CD8-positive, alpha-beta T cell (primary cell): ENCODE measurements at regions of chr1 and their contacts with region 1.

Region 1: GRCh38 chr1:32247983-32248889 is 1.2 kb downstream of the FAM167B start:
- DNase-seq: peak; percentile 51 to 84 (median 76)
- ATAC-seq: peak; percentile 5
- H3K4me3 ChIP-seq: peak overlapping the region; percentile 21 to 28
- H3K4me3 Mint-ChIP-seq: peak overlapping the region; percentile 66
- H3K27ac ChIP-seq: peak overlapping the region; percentile 40 to 93
- H3K27ac Mint-ChIP-seq: peak overlapping the region; percentile 99
- H3K4me1 ChIP-seq: peaks cover 42% of the 10 kb centered on the region
- H3K4me1 Mint-ChIP-seq: peaks cover 44% of the 10 kb centered on the region
- H3K27me3 ChIP-seq: no peaks in the 10 kb centered on the region
- H3K27me3 Mint-ChIP-seq: no peaks in the 10 kb centered on the region
- CTCF ChIP-seq: peak; percentile 86

Region 2: DNA sequence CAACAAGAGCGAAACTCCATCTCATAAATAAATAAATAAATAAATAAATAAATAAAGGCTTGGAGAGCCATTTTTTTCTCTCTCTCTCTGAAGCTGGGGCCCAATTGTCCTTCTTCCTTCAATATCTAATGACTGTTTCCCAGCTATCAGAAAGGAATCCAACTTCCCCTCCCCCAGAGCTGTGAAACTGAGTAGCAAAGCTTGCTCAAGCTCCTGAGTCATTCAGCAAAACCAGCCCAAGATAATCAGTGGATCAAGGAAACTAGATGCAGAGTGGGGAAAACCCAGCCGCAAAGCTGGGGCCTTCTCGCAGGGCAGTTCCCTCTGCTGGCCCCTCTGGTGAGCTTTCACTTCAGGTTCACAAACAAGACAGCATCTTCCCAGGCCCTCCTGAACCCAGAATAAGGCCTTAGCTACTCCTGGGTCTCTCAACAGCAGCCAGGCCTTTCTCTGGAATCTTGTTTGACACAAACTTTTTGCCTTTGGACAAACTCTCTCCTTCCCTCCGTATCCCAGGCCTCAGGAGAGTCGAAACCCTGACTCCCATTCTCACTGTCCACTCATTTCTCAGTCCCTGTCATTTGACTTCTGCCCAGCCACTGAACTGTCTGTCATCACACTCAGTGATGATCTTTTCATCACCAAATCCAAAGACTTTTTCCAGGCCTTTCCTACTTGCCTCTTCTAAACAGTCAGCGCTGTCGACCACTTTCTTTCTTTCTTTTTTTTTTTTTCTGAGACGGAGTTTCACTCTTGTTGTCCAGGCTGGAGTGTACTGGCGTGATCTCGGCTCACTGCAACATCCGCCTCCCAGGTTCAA is 292.1 kb before region 1 on chr1:
- CTCF ChIA-PET with region 1: no interaction called
- POLR2A ChIA-PET with region 1: no interaction called
- intact Hi-C with region 1: no loop called
- DNase-seq: peak; percentile 42 to 93 (median 72)
- ATAC-seq: peak; percentile 80
- H3K4me3 ChIP-seq: no peak overlapping the region
- H3K4me3 Mint-ChIP-seq: peak overlapping the region; percentile 42
- H3K27ac ChIP-seq: peak overlapping the region in 1 of 2 experiments; percentile 58
- H3K27ac Mint-ChIP-seq: peak overlapping the region; percentile 58
- H3K4me1 ChIP-seq: peaks cover 22% of the 10 kb centered on the region
- H3K4me1 Mint-ChIP-seq: peaks cover 43% of the 10 kb centered on the region
- H3K27me3 ChIP-seq: no peaks in the 10 kb centered on the region
- H3K27me3 Mint-ChIP-seq: no peaks in the 10 kb centered on the region
- CTCF ChIP-seq: no peak

Region 3: DNA sequence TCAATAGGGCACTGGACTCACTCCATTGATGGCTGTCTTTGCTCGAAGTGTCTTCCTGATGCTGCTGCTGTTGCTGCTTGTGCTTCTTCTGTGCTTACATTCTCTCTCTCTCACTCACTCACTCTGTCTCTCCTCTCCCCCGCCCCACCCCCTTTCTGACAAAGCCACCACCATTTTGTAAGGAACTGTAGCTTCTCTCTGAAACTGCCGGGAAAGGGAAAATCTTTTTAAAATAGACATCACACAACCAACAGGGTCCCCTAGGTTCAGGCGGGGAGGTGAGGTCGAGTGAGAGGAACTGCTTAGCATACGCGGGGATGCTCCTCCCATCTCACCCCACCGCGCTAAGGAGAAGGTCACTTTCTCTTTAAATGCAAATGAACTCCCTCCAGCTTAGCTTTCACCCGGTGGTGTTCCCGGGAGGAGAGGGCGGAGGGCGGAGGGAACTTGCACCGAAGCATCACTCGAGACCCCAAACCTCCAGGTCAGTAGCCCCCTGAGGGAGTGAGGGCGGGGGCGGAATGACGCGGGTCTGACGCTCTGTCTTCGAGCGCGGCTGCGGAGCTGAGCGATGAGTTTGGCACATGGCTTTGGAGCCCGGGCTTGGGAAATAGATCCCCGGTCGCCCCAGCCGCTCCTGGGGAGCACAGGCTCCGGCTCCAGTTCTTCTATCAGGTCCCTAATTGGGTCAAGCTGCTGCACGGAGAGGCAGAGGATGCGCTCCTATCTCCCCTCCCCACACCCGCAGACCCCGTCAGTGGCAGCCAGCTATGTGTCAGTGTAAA is 47.8 kb before region 1 on chr1 and contains the start of gene CCDC28B:
- CTCF ChIA-PET with region 1: interaction called, 3 read pairs
- POLR2A ChIA-PET with region 1: interaction called, 6 read pairs
- intact Hi-C with region 1: loop called in 1 of 2 experiments (anchors 2 kb)
- DNase-seq: peak in 8 of 9 experiments; percentile 32 to 81 (median 64)
- ATAC-seq: peak; percentile 49
- H3K4me3 ChIP-seq: peak within 1 kb of the TSS; percentile 69 to 70
- H3K4me3 Mint-ChIP-seq: peak within 1 kb of the TSS; percentile 85
- H3K27ac ChIP-seq: peak within 1 kb of the TSS; percentile 75 to 78
- H3K27ac Mint-ChIP-seq: peak within 1 kb of the TSS; percentile 97
- H3K4me1 ChIP-seq: peaks cover 46% of the 10 kb centered on the region
- H3K4me1 Mint-ChIP-seq: peaks cover 59% of the 10 kb centered on the region
- H3K27me3 ChIP-seq: no peaks in the 10 kb centered on the region
- H3K27me3 Mint-ChIP-seq: no peaks in the 10 kb centered on the region
- CTCF ChIP-seq: no peak
- total RNA-seq, gene CCDC28B: 3.8 to 5.2 TPM

Region 4: DNA sequence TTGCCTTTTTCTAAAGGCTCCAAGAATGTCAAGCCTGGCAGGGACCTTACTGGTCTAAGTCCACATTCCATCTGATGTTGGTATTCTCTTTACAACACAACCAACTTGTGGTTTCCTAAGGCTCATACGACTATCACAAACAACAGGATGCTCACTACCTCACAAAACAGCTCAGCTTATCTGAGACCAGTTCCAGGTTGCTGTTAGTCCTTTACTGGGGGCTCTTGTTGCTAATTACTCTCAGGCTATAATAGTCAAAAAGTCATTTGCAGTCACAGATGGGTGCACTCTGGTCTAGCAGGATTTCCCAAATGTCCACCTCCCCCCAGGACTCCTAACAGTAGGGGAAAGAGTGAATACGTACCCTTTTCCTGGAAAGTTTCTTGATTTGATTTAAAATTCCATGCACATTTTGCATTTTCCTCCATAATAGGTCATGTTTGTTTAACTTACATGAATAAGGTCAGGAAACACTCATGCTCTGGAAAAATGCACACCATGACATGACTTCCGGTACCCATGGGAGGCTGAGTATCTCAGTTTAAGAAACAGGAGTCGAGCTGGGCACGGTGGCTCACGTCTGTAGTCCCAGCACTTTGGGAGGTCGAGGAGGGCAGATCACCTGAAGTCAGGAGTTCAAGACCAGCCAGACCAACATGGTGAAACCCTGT is 18.8 kb after region 1 on chr1:
- CTCF ChIA-PET with region 1: interaction called, 74 read pairs
- POLR2A ChIA-PET with region 1: interaction called, 206 read pairs
- intact Hi-C with region 1: loop called in 1 of 2 experiments (anchors 2 kb)
- DNase-seq: peak in 1 of 9 experiments; percentile 60
- ATAC-seq: peak; percentile 18
- H3K4me3 ChIP-seq: peak overlapping the region in 1 of 2 experiments; percentile 20
- H3K4me3 Mint-ChIP-seq: peak overlapping the region; percentile 76
- H3K27ac ChIP-seq: peak overlapping the region; percentile 50 to 54
- H3K27ac Mint-ChIP-seq: peak overlapping the region; percentile 98
- H3K4me1 ChIP-seq: peaks cover 71% of the 10 kb centered on the region
- H3K4me1 Mint-ChIP-seq: peaks cover 61% of the 10 kb centered on the region
- H3K27me3 ChIP-seq: no peaks in the 10 kb centered on the region
- H3K27me3 Mint-ChIP-seq: no peaks in the 10 kb centered on the region
- CTCF ChIP-seq: no peak

Region 5: GRCh38 chr1:32273388-32274208 is 25.4 kb after region 1 on chr1:
- CTCF ChIA-PET with region 1: interaction called, 14 read pairs
- POLR2A ChIA-PET with region 1: interaction called, 206 read pairs
- intact Hi-C with region 1: loop called (anchors 1 kb)
- DNase-seq: peak; percentile 58 to 96 (median 87)
- ATAC-seq: peak; percentile 88
- H3K4me3 ChIP-seq: peak overlapping the region; percentile 23 to 53
- H3K4me3 Mint-ChIP-seq: peak overlapping the region; percentile 83
- H3K27ac ChIP-seq: peak overlapping the region; percentile 36 to 77
- H3K27ac Mint-ChIP-seq: peak overlapping the region; percentile 98
- H3K4me1 ChIP-seq: peaks cover 78% of the 10 kb centered on the region
- H3K4me1 Mint-ChIP-seq: peaks cover 67% of the 10 kb centered on the region
- H3K27me3 ChIP-seq: no peaks in the 10 kb centered on the region
- H3K27me3 Mint-ChIP-seq: no peaks in the 10 kb centered on the region
- CTCF ChIP-seq: no peak

Region 6: GRCh38 chr1:32321712-32322291 is 73.6 kb after region 1 on chr1:
- CTCF ChIA-PET with region 1: interaction called, 18 read pairs
- POLR2A ChIA-PET with region 1: interaction called, 15 read pairs
- intact Hi-C with region 1: no loop called
- DNase-seq: peak in 7 of 9 experiments; percentile 11 to 72 (median 43)
- ATAC-seq: peak; percentile 87
- H3K4me3 ChIP-seq: peak overlapping the region in 1 of 2 experiments; percentile 6
- H3K4me3 Mint-ChIP-seq: peak overlapping the region; percentile 56
- H3K27ac ChIP-seq: peak overlapping the region; percentile 29 to 41
- H3K27ac Mint-ChIP-seq: peak overlapping the region; percentile 81
- H3K4me1 ChIP-seq: peaks cover 38% of the 10 kb centered on the region
- H3K4me1 Mint-ChIP-seq: peaks cover 38% of the 10 kb centered on the region
- H3K27me3 ChIP-seq: no peaks in the 10 kb centered on the region
- H3K27me3 Mint-ChIP-seq: no peaks in the 10 kb centered on the region
- CTCF ChIP-seq: no peak

Region 7: GRCh38 chr1:32351399-32352238 is 103.4 kb after region 1 on chr1:
- CTCF ChIA-PET with region 1: no interaction called
- POLR2A ChIA-PET with region 1: interaction called, 12 read pairs
- intact Hi-C with region 1: no loop called
- DNase-seq: peak; percentile 81 to 97 (median 90)
- ATAC-seq: peak; percentile 95
- H3K4me3 ChIP-seq: peak overlapping the region; percentile 57 to 85
- H3K4me3 Mint-ChIP-seq: peak overlapping the region; percentile 81
- H3K27ac ChIP-seq: peak overlapping the region; percentile 60 to 69
- H3K27ac Mint-ChIP-seq: peak overlapping the region; percentile 49
- H3K4me1 ChIP-seq: peaks cover 30% of the 10 kb centered on the region
- H3K4me1 Mint-ChIP-seq: peaks cover 49% of the 10 kb centered on the region
- H3K27me3 ChIP-seq: no peaks in the 10 kb centered on the region
- H3K27me3 Mint-ChIP-seq: no peaks in the 10 kb centered on the region
- CTCF ChIP-seq: no peak

Region 8: GRCh38 chr1:32964461-32965250 is 716.4 kb after region 1 on chr1 and contains the start of gene RNF19B:
- CTCF ChIA-PET with region 1: no interaction called
- POLR2A ChIA-PET with region 1: no interaction called
- intact Hi-C with region 1: no loop called
- DNase-seq: peak; percentile 89 to 97 (median 93)
- ATAC-seq: peak; percentile 93
- H3K4me3 ChIP-seq: peak within 1 kb of the TSS; percentile 68 to 70
- H3K4me3 Mint-ChIP-seq: peak within 1 kb of the TSS; percentile 88
- H3K27ac ChIP-seq: peak within 1 kb of the TSS; percentile 51 to 75
- H3K27ac Mint-ChIP-seq: peak within 1 kb of the TSS; percentile 91
- H3K4me1 ChIP-seq: peaks cover 24% of the 10 kb centered on the region
- H3K4me1 Mint-ChIP-seq: peaks cover 38% of the 10 kb centered on the region
- H3K27me3 ChIP-seq: peaks cover 0 to 3% of the 10 kb centered on the region in 2 experiments
- H3K27me3 Mint-ChIP-seq: no peaks in the 10 kb centered on the region
- CTCF ChIP-seq: no peak
- total RNA-seq, gene RNF19B: 43.9 to 44.6 TPM